ENCODE measurements at regions of chr1 and their contacts with region 1.

Region 1: GRCh38 chr1:93888896-93889295 is 9.9 kb upstream of the DNTTIP2 start:
- DNase-seq: no peak
- ATAC-seq: no peak
- H3K4me3 ChIP-seq: no peak overlapping the region
- H3K27ac ChIP-seq: no peak overlapping the region
- H3K4me1 ChIP-seq: no peaks in the 10 kb centered on the region
- H3K27me3 ChIP-seq: no peaks in the 10 kb centered on the region
- CTCF ChIP-seq: no peak
- POLR2A ChIP-seq: no peak
- RAD21 ChIP-seq: no peak

Region 2: DNA sequence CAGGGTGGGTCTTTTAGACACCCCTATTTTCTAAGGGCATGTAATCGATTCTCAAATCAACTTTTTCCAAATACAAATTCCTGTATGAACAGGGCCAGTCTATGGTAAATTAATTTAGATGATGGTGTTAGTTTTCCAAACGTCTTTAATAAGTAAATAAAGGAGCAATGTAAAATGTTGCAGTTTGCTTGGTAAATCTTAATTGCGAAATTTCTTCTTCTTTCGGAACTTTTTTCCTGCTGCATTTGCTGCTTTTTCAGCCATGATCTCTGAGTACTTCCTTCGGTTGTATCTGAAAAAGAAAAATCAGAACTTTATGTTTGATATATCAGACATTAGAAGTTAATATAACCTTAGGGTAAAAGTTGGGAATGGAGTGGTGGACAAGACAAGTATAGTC is 19.2 kb before region 1 on chr1:
- CTCF ChIA-PET with region 1: no interaction called
- POLR2A ChIA-PET with region 1: no interaction called
- dilution Hi-C with region 1: no loop called
- in situ Hi-C with region 1: no loop called
- intact Hi-C with region 1: loop called (anchors 1 kb)
- DNase-seq: no peak
- ATAC-seq: no peak
- H3K4me3 ChIP-seq: no peak overlapping the region
- H3K27ac ChIP-seq: no peak overlapping the region
- H3K4me1 ChIP-seq: no peaks in the 10 kb centered on the region
- H3K27me3 ChIP-seq: no peaks in the 10 kb centered on the region
- CTCF ChIP-seq: no peak
- POLR2A ChIP-seq: no peak
- RAD21 ChIP-seq: no peak

Region 3: DNA sequence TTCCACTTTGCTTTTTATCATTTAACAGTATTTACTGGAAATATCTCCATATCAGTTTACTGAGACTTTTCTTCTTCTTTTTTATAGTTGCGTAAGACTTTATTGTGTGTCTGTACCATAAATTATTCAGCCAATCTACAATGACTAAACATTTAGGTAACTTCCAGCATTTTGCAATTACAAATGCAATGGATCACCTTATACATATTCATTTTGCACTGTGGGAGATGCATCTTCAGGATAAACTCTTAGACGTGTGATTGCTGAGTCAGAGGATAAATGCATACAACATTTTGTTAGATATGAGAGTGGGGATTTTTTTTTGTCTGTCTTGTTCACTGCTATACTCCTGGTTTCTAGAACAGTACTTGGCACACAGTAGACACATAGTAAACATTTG is 116.0 kb after region 1 on chr1:
- CTCF ChIA-PET with region 1: no interaction called
- POLR2A ChIA-PET with region 1: no interaction called
- dilution Hi-C with region 1: no loop called
- in situ Hi-C with region 1: no loop called
- intact Hi-C with region 1: no loop called
- DNase-seq: peak; percentile 74
- ATAC-seq: peak; percentile 60
- H3K4me3 ChIP-seq: no peak overlapping the region
- H3K27ac ChIP-seq: peak overlapping the region; percentile 36; the same call in 1 of the 2 replicates
- H3K4me1 ChIP-seq: peaks cover 3% of the 10 kb centered on the region; the same call in 1 of the 2 replicates
- H3K27me3 ChIP-seq: no peaks in the 10 kb centered on the region; the same call in 1 of the 2 replicates
- CTCF ChIP-seq: no peak
- POLR2A ChIP-seq: no peak
- RAD21 ChIP-seq: no peak